Mammary epithelial cell (primary cell): ENCODE measurements at regions of chr10 and their contacts with region 1.

Region 1: GRCh38 chr10:68088744-68089143 is 13.7 kb upstream of the HERC4 start:
- DNase-seq: peak; percentile 85
- H3K4me3 ChIP-seq: no peak overlapping the region
- H3K27ac ChIP-seq: peak overlapping the region; percentile 61
- H3K4me1 ChIP-seq: peaks cover 48% of the 10 kb centered on the region
- H3K27me3 ChIP-seq: no peaks in the 10 kb centered on the region
- CTCF ChIP-seq: no peak

Region 2: GRCh38 chr10:68163735-68164134 is 75.0 kb after region 1 on chr10:
- CTCF ChIA-PET with region 1: no interaction called
- dilution Hi-C with region 1: no loop called
- in situ Hi-C with region 1: loop called (anchors 5 kb)
- intact Hi-C with region 1: no loop called
- DNase-seq: no peak
- H3K4me3 ChIP-seq: no peak overlapping the region
- H3K27ac ChIP-seq: no peak overlapping the region
- H3K4me1 ChIP-seq: no peaks in the 10 kb centered on the region
- H3K27me3 ChIP-seq: no peaks in the 10 kb centered on the region
- CTCF ChIP-seq: no peak